Activated naive CD4-positive, alpha-beta T cell treated with anti-CD3 and anti-CD28 coated beads, Interleukin-2, amount 10 ng/mL, durations not matched to agents 7 days and 5 days (primary cell): ENCODE measurements at regions of chr15 and their contacts with region 1.

Region 1: DNA sequence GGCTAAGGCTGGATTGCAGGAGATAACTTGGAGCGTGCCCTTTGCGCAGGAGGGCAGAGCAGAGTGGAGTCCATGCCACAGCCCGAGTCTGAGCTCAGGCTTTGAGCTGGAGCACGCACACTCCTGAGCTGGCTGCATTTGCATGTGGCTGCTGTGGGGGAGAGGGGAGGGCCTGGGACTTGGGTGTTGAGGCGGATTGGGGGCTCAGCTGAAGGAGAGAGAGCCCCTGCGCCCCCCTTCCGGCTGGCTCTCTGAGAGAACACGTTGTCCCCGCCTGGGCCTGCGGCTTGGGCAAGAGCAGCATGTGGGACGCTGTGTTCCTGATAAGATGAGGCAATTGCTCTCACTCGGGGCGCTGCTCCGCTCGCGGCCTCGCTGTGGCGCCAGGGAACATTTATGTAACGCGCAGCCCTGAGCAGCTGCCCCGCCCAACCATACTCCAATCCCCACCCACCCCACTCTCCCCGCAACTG is 39.1 kb downstream of the KLF13 start:
- DNase-seq: peak; percentile 88
- H3K4me3 Mint-ChIP-seq: peak overlapping the region; percentile 70
- H3K27ac Mint-ChIP-seq: peak overlapping the region; percentile 97
- H3K4me1 Mint-ChIP-seq: peaks cover 100% of the 10 kb centered on the region
- H3K27me3 Mint-ChIP-seq: no peaks in the 10 kb centered on the region

Region 2: DNA sequence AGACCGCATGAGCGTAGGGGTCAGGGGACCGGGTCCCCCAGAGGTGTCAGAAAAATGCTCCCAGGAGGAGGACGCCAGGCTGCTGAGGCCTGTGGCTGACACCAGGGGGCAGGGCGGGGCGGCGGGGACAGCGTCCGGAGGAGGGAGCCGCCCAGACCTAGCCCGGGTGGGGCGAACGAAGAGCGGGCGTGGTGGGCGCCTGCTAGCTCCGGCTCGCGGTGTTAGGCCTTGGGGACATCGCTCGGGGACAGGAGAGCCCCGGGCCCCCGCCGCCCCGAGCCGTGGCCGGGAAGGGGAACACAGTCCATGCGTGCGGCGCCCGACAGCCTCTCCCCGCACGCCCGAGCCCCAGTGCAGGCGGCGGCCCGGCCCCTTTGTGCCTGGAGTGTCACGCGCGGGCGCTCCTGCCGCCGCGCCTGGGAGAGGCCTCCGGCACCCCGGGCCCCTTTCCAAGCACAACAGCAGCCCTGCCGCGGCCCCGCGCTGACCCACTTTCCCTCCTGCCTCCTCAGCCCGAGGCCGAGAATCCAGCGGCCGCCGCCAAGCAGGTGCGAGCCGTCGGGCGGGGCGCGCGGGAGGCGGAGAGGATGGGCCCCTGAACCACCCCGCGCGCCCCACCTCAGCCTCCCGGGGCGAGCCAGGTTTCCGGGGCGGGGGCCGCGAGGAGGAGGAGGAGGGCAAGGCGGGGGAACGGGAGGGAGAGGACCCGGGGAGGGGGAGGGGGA is 150.0 kb before region 1 on chr15:
- CTCF ChIA-PET with region 1: interaction called, 12 read pairs
- DNase-seq: peak; percentile 87
- H3K4me3 Mint-ChIP-seq: peak overlapping the region; percentile 69
- H3K27ac Mint-ChIP-seq: peak overlapping the region; percentile 94
- H3K4me1 Mint-ChIP-seq: peaks cover 65% of the 10 kb centered on the region
- H3K27me3 Mint-ChIP-seq: peaks cover 10% of the 10 kb centered on the region

Region 3: DNA sequence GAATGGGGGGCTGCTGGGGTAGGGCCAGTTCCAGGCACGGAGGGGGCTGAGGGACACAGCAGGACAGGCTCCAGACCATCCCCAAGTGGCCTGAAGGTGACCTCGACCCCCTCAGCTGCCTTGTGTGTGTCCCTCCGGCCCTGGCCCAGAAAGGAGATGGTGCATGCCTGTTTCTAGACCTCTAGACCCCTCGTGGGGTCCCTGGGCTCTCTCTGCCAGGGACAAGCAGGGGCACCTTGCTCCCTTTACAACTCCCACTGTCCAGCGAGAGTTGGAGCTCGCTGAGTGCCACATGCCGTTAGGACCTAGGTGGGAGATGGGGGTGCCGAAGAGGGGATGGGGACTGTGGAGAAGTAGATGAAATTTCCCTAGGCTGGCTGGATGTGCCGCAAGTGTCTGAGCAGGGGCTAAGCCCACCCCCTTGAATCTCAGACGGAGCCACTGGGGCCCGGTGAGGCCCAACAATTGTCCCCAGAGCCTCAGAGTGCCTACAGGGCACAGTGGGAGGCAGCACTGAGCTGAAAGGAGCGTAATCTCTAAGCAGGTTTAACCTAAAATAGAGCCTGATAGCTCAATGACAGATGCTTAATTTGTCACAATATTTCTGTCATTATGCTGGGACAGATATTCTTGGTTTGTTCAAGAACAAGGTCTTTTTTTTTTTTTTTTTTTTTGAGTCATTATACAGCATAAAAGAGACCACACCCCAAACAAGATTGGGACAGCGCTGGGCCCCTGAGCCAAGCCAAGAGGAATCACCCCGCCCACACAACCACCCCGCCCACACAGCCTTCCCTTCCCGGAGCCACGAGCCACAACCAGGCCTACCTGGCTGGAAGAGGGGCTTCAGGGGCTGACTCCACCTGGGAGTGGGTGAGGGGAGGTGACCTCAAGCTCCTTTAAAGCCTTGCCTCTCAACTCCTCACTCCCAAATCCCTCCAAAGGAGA is 62.6 kb before region 1 on chr15:
- CTCF ChIA-PET with region 1: no interaction called
- DNase-seq: no peak
- H3K4me3 Mint-ChIP-seq: no peak overlapping the region
- H3K27ac Mint-ChIP-seq: no peak overlapping the region
- H3K4me1 Mint-ChIP-seq: peaks cover 30% of the 10 kb centered on the region
- H3K27me3 Mint-ChIP-seq: peaks cover 41% of the 10 kb centered on the region

Region 4: DNA sequence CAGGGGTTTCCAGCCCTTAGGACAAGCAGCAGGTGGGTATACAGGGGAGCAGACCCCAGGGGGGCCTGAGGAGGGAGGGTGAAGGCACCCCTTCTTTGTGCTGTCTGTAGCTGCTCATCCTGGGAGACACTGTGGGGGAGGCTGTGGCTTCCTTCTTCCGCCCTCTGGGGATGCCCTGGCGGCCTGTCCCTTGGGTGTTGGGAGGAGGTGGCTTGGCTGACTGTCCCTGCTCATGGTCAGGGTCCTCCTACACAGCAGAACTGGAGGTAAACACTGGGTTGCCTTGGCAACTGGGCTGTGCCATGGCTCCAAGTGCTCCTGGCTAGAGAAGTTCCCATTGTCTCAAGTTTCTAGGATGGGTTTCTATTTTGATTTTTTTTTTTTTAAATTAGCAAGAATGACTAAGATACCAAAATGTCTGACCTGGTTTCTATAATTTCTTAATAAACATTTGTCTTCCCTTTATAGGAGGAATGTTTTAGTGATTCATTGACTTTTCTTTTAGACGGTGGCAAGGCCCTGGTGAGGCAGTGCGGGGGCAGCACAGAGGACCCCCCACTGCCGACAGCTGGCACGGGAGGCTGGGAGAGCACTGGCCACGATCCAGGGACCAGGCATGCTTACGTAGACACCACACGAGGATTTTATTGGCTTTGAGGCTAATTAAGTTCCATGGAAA is 26.7 kb before region 1 on chr15:
- CTCF ChIA-PET with region 1: interaction called, 21 read pairs
- DNase-seq: peak; percentile 55
- H3K4me3 Mint-ChIP-seq: peak overlapping the region; percentile 26
- H3K27ac Mint-ChIP-seq: peak overlapping the region; percentile 82
- H3K4me1 Mint-ChIP-seq: peaks cover 100% of the 10 kb centered on the region
- H3K27me3 Mint-ChIP-seq: no peaks in the 10 kb centered on the region

Region 5: DNA sequence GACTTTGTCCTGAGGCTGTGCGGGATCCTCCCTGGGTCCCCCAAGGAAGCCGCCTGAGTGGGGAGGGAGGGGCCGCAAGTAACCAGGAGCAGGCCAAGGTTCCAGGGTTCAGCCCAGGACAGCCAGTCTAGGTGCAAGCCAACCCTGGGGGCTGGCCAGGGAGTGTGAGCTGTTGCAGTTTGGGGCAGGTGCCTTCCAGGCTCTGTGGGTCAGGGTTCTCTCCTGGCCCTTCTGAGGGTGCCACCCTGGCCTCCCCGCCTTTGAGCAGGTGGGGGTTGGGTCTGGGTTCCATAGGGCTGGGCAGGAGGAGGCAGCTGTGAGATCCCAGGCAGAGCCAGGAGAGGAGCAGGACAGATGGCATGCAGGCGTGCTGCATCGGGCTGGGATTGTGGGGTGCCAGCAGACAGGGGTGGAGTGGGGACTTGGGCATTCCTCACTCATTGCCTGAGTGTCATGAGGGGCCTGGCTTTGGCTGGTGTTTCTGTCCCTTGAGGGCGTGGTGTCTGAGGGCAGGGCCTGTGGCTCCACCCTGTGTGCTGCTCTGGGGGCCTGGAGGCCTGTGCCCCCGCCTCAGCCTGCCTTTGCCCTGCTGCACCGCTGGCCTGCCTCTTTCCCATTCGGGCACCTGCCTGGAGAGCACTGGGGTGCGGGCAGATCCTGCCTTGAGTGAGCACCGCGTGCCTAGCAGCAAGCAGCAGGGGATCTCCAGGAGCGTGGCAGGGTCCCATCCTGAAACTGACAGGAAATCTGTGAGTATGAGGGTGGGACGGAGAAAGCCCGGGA is 20.7 kb before region 1 on chr15:
- CTCF ChIA-PET with region 1: interaction called, 21 read pairs
- DNase-seq: no peak
- H3K4me3 Mint-ChIP-seq: peak overlapping the region; percentile 85
- H3K27ac Mint-ChIP-seq: peak overlapping the region; percentile 99
- H3K4me1 Mint-ChIP-seq: peaks cover 100% of the 10 kb centered on the region
- H3K27me3 Mint-ChIP-seq: no peaks in the 10 kb centered on the region

Region 6: GRCh38 chr15:31435261-31435911 is 69.7 kb after region 1 on chr15:
- CTCF ChIA-PET with region 1: interaction called, 160 read pairs
- DNase-seq: peak; percentile 91
- H3K4me3 Mint-ChIP-seq: peak overlapping the region; percentile 71
- H3K27ac Mint-ChIP-seq: peak overlapping the region; percentile 100
- H3K4me1 Mint-ChIP-seq: peaks cover 92% of the 10 kb centered on the region
- H3K27me3 Mint-ChIP-seq: no peaks in the 10 kb centered on the region

Region 7: DNA sequence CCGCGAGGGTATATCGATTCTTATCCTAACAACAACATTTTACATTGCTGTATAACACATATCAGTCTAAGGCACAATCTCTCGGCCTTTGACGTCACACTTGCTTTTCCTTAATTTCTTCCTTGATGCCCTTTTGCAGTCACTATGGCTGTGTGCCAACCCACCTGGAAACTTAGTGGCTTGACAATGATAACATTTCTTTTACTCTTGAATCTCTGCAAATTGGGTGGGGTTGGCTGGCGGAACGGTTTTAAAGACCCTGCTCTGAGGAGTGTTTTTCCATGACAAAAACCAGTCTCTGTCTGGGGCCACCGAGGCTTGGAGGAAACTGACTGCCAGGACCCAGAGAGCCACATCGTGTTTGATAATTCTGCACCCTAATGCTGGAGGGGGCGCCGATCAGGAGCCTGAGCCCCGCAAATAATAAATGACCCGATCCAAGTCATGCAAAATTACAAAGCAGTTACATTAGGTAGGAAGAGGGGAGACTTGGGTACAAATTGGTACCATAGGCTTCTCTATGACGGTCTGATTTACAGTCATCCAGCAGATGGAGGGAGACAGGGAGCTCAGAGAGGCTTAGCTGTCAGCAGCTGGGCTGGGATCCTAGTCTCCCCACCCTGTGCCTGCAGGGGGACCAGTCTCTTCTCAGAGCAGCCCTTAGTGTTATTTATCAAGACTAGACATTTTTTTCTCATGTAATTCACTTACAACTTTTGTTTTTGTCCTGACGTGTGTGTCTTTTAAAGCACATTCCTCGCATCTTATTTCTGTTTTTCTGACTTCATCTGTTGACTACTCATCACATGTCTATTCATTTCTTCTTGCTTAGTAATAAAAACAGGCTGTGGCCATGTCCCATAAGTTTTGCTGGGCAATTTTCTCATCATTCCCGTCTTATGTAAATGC is 76.8 kb after region 1 on chr15:
- CTCF ChIA-PET with region 1: interaction called, 160 read pairs
- DNase-seq: no peak
- H3K4me3 Mint-ChIP-seq: peak overlapping the region; percentile 29
- H3K27ac Mint-ChIP-seq: peak overlapping the region; percentile 40
- H3K4me1 Mint-ChIP-seq: peaks cover 56% of the 10 kb centered on the region
- H3K27me3 Mint-ChIP-seq: no peaks in the 10 kb centered on the region

Region 8: GRCh38 chr15:31472636-31473384 is 107.1 kb after region 1 on chr15:
- CTCF ChIA-PET with region 1: interaction called, 23 read pairs
- DNase-seq: peak; percentile 86
- H3K4me3 Mint-ChIP-seq: peak overlapping the region; percentile 36
- H3K27ac Mint-ChIP-seq: peak overlapping the region; percentile 91
- H3K4me1 Mint-ChIP-seq: peaks cover 47% of the 10 kb centered on the region
- H3K27me3 Mint-ChIP-seq: peaks cover 6% of the 10 kb centered on the region